Naive thymus-derived CD4-positive, alpha-beta T cell (primary cell): ENCODE measurements at regions of chr5 and their contacts with region 1.

Region 1: GRCh38 chr5:128083033-128083810 is at the start of gene SLC12A2:
- DNase-seq: peak; percentile 85 to 98 (median 97)
- ATAC-seq: peak; percentile 83
- H3K4me3 ChIP-seq: peak within 1 kb of the TSS; percentile 76
- H3K4me3 Mint-ChIP-seq: peak within 1 kb of the TSS; percentile 89 to 97 (median 94)
- H3K27ac ChIP-seq: peak within 1 kb of the TSS; percentile 89
- H3K27ac Mint-ChIP-seq: peak within 1 kb of the TSS; percentile 89 to 98 (median 92)
- H3K4me1 ChIP-seq: peaks cover 20 to 41% of the 10 kb centered on the region in 2 donors
- H3K4me1 Mint-ChIP-seq: peaks cover 44 to 78% (median 69%) of the 10 kb centered on the region in 7 donors
- H3K27me3 ChIP-seq: no peaks in the 10 kb centered on the region
- H3K27me3 Mint-ChIP-seq: no peaks in the 10 kb centered on the region
- total RNA-seq, gene SLC12A2: 8.2 to 17.3 (median 11.3) TPM

Region 2: GRCh38 chr5:126499853-126500342 is 1583.3 kb before region 1 on chr5:
- CTCF ChIA-PET with region 1: no interaction called
- POLR2A ChIA-PET with region 1: no interaction called
- intact Hi-C with region 1: loop called in 1 of 2 experiments (anchors 10 kb)
- DNase-seq: peak in 7 of 9 donors; percentile 36 to 84 (median 78)
- ATAC-seq: peak; percentile 88
- H3K4me3 ChIP-seq: no peak overlapping the region
- H3K4me3 Mint-ChIP-seq: peak overlapping the region in 5 of 10 donors; percentile 10 to 54 (median 24)
- H3K27ac ChIP-seq: no peak overlapping the region
- H3K27ac Mint-ChIP-seq: peak overlapping the region in 8 of 9 donors; percentile 22 to 88 (median 76)
- H3K4me1 ChIP-seq: peaks cover 0 to 25% of the 10 kb centered on the region in 2 donors
- H3K4me1 Mint-ChIP-seq: peaks cover 4 to 58% (median 44%) of the 10 kb centered on the region in 7 donors
- H3K27me3 ChIP-seq: no peaks in the 10 kb centered on the region
- H3K27me3 Mint-ChIP-seq: no peaks in the 10 kb centered on the region

Region 3: GRCh38 chr5:126852091-126852571 is 1231.1 kb before region 1 on chr5:
- CTCF ChIA-PET with region 1: no interaction called
- POLR2A ChIA-PET with region 1: no interaction called
- intact Hi-C with region 1: loop called in 1 of 2 experiments (anchors 5 kb)
- DNase-seq: peak in 7 of 9 donors; percentile 38 to 72 (median 63)
- ATAC-seq: peak; percentile 81
- H3K4me3 ChIP-seq: peak overlapping the region; percentile 13
- H3K4me3 Mint-ChIP-seq: peak overlapping the region; percentile 71 to 91 (median 84)
- H3K27ac ChIP-seq: peak overlapping the region; percentile 67
- H3K27ac Mint-ChIP-seq: peak overlapping the region; percentile 95 to 99 (median 99)
- H3K4me1 ChIP-seq: peaks cover 12 to 33% of the 10 kb centered on the region in 2 donors
- H3K4me1 Mint-ChIP-seq: peaks cover 23 to 76% (median 67%) of the 10 kb centered on the region in 7 donors
- H3K27me3 ChIP-seq: no peaks in the 10 kb centered on the region
- H3K27me3 Mint-ChIP-seq: no peaks in the 10 kb centered on the region

Region 4: GRCh38 chr5:127517480-127518318 is 565.5 kb before region 1 on chr5 and contains the start of gene PRRC1:
- CTCF ChIA-PET with region 1: no interaction called
- POLR2A ChIA-PET with region 1: no interaction called
- intact Hi-C with region 1: loop called (anchors 1 kb)
- DNase-seq: peak; percentile 63 to 80 (median 74)
- ATAC-seq: peak; percentile 99
- H3K4me3 ChIP-seq: peak within 1 kb of the TSS; percentile 94
- H3K4me3 Mint-ChIP-seq: peak within 1 kb of the TSS; percentile 87 to 92 (median 89)
- H3K27ac ChIP-seq: peak within 1 kb of the TSS; percentile 89
- H3K27ac Mint-ChIP-seq: peak within 1 kb of the TSS; percentile 48 to 91 (median 82)
- H3K4me1 ChIP-seq: peaks cover 0 to 18% of the 10 kb centered on the region in 2 donors
- H3K4me1 Mint-ChIP-seq: peaks cover 25 to 48% (median 38%) of the 10 kb centered on the region in 7 donors
- H3K27me3 ChIP-seq: no peaks in the 10 kb centered on the region
- H3K27me3 Mint-ChIP-seq: peaks cover under 1 to 7% (median 6%) of the 10 kb centered on the region in 5 donors
- total RNA-seq, gene PRRC1: 34.6 to 56.6 (median 49.4) TPM

Region 5: GRCh38 chr5:127875235-127876021 is 207.8 kb before region 1 on chr5:
- CTCF ChIA-PET with region 1: no interaction called
- POLR2A ChIA-PET with region 1: no interaction called
- intact Hi-C with region 1: loop called in 1 of 2 experiments (anchors 5 kb)
- DNase-seq: peak in 4 of 9 donors; percentile 10 to 27 (median 16)
- ATAC-seq: peak; percentile 44
- H3K4me3 ChIP-seq: no peak overlapping the region
- H3K4me3 Mint-ChIP-seq: no peak overlapping the region
- H3K27ac ChIP-seq: no peak overlapping the region
- H3K27ac Mint-ChIP-seq: no peak overlapping the region
- H3K4me1 ChIP-seq: no peaks in the 10 kb centered on the region
- H3K4me1 Mint-ChIP-seq: peaks cover 0 to 3% (median 0%) of the 10 kb centered on the region in 7 donors
- H3K27me3 ChIP-seq: no peaks in the 10 kb centered on the region
- H3K27me3 Mint-ChIP-seq: peaks cover 0 to 7% (median 5%) of the 10 kb centered on the region in 5 donors

Region 6: GRCh38 chr5:128101676-128102075 is 18.5 kb after region 1 on chr5:
- CTCF ChIA-PET with region 1: interaction called, 3 read pairs
- POLR2A ChIA-PET with region 1: interaction called, 3 read pairs
- intact Hi-C with region 1: loop called in 1 of 2 experiments (anchors 2 kb)
- DNase-seq: no peak
- ATAC-seq: no peak
- H3K4me3 ChIP-seq: no peak overlapping the region
- H3K4me3 Mint-ChIP-seq: no peak overlapping the region
- H3K27ac ChIP-seq: no peak overlapping the region
- H3K27ac Mint-ChIP-seq: no peak overlapping the region
- H3K4me1 ChIP-seq: no peaks in the 10 kb centered on the region
- H3K4me1 Mint-ChIP-seq: peaks cover 0 to 15% (median 7%) of the 10 kb centered on the region in 7 donors
- H3K27me3 ChIP-seq: no peaks in the 10 kb centered on the region
- H3K27me3 Mint-ChIP-seq: no peaks in the 10 kb centered on the region

Region 7: DNA sequence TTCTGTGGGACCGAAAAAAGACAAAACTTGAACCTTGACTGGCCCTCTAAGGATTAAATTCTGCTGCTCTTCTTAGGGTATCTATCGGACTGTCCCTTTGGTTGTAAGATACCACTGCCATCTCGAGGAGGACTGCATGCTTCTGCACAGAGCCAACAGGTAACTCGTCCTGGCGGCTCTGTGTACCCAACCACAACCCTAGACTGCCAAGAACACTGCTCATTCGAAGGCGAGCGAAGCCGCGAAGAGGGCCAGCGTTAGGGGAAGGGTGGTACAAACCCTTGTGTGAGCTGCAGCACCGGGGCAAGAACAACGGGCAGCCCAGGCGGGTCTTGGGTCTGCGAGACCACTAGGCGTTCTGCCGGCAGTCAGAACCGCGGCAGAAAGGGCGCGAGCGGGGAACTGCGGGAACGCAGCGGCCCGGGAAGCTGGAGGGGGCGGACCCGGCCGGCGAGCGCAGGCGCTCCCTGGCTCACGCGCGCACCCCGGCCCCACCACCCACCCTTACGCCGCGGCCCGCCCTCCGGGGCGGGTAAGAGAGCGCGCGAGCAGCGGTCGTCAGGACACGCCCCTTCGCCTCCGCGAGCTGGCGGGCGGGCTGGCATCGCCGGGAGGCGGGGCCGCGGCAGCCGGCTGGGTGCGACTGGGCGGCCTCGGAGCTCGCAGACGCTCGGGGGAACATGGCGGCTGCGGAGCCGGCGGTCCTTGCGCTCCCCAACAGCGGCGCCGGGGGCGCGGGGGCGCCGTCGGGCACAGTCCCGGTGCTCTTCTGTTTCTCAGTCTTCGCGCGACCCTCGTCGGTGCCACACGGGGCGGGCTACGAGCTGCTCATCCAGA is 1011.1 kb after region 1 on chr5 and contains the start of gene ISOC1:
- CTCF ChIA-PET with region 1: no interaction called
- POLR2A ChIA-PET with region 1: no interaction called
- intact Hi-C with region 1: loop called (anchors 1 to 2 kb)
- DNase-seq: peak; percentile 89 to 95 (median 94)
- ATAC-seq: peak; percentile 96
- H3K4me3 ChIP-seq: peak within 1 kb of the TSS; percentile 72
- H3K4me3 Mint-ChIP-seq: peak within 1 kb of the TSS; percentile 89 to 95 (median 92)
- H3K27ac ChIP-seq: peak within 1 kb of the TSS; percentile 79
- H3K27ac Mint-ChIP-seq: peak within 1 kb of the TSS; percentile 52 to 94 (median 90)
- H3K4me1 ChIP-seq: peaks cover 7 to 8% of the 10 kb centered on the region in 2 donors
- H3K4me1 Mint-ChIP-seq: peaks cover 13 to 47% (median 35%) of the 10 kb centered on the region in 7 donors
- H3K27me3 ChIP-seq: no peaks in the 10 kb centered on the region
- H3K27me3 Mint-ChIP-seq: peaks cover 0 to 24% (median 0%) of the 10 kb centered on the region in 5 donors
- total RNA-seq, gene ISOC1: 5.3 to 18.9 (median 11.9) TPM